Natural killer cell (primary cell): ENCODE measurements at regions of chr4 and their contacts with region 1.

Region 1: DNA sequence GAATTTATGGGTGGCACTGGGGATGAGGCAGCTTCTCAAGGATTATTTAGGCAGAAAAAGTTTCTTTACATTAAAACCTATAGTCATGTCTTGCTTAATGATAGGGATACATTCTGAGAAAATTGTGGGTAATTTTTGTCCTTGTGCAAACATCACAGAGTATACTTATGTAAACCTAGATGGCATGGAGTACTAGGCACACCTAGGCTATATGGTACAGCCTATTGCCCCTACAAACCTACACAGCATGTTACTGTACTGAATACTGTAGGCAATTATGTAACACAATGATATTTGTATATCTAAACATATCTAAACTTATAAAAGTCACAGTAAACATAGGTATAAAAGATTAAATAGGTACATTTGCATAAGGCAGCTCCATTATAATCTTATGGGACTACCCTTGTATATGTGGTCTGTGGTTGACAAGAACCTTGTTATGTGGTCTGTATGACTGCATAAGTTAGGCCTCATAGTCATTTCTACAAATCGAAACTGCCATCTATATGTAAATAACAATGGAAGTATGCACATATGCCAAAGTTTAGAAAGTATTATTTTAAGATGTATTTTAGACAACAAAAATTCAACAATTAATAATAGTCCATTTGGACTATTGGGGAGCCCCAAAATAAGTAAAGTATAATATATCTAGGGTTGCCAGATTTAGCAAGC is 87.3 kb downstream of the CFAP299 start:
- DNase-seq: peak in 1 of 2 donors; percentile 63
- ATAC-seq: peak; percentile 81 to 94 (median 90)
- H3K4me3 ChIP-seq: no peak overlapping the region
- H3K4me3 Mint-ChIP-seq: no peak overlapping the region
- H3K27ac ChIP-seq: peak overlapping the region; percentile 34
- H3K27ac Mint-ChIP-seq: peak overlapping the region; percentile 76 to 79
- H3K4me1 ChIP-seq: peaks cover 8% of the 10 kb centered on the region
- H3K4me1 Mint-ChIP-seq: peaks cover 49 to 51% of the 10 kb centered on the region in 2 donors
- H3K27me3 ChIP-seq: no peaks in the 10 kb centered on the region
- H3K27me3 Mint-ChIP-seq: no peaks in the 10 kb centered on the region
- CTCF ChIP-seq: no peak

Region 2: GRCh38 chr4:80295336-80295735 is 127.5 kb before region 1 on chr4:
- intact Hi-C with region 1: no loop called
- DNase-seq: no peak
- ATAC-seq: no peak
- H3K4me3 ChIP-seq: no peak overlapping the region
- H3K4me3 Mint-ChIP-seq: no peak overlapping the region
- H3K27ac ChIP-seq: no peak overlapping the region
- H3K27ac Mint-ChIP-seq: no peak overlapping the region
- H3K4me1 ChIP-seq: no peaks in the 10 kb centered on the region
- H3K4me1 Mint-ChIP-seq: no peaks in the 10 kb centered on the region
- H3K27me3 ChIP-seq: peaks cover 4% of the 10 kb centered on the region
- H3K27me3 Mint-ChIP-seq: peaks cover 6 to 12% of the 10 kb centered on the region in 2 donors
- CTCF ChIP-seq: no peak

Region 3: GRCh38 chr4:80438016-80438415 is 15.2 kb after region 1 on chr4:
- intact Hi-C with region 1: loop called (anchors 2 kb)
- DNase-seq: peak in 1 of 2 donors; percentile 19
- ATAC-seq: peak; percentile 54 to 71 (median 58)
- H3K4me3 ChIP-seq: no peak overlapping the region
- H3K4me3 Mint-ChIP-seq: peak overlapping the region; percentile 21
- H3K27ac ChIP-seq: peak overlapping the region; percentile 40
- H3K27ac Mint-ChIP-seq: peak overlapping the region; percentile 71 to 85
- H3K4me1 ChIP-seq: peaks cover 18% of the 10 kb centered on the region
- H3K4me1 Mint-ChIP-seq: peaks cover 27 to 35% of the 10 kb centered on the region in 2 donors
- H3K27me3 ChIP-seq: no peaks in the 10 kb centered on the region
- H3K27me3 Mint-ChIP-seq: no peaks in the 10 kb centered on the region
- CTCF ChIP-seq: no peak

Region 4: DNA sequence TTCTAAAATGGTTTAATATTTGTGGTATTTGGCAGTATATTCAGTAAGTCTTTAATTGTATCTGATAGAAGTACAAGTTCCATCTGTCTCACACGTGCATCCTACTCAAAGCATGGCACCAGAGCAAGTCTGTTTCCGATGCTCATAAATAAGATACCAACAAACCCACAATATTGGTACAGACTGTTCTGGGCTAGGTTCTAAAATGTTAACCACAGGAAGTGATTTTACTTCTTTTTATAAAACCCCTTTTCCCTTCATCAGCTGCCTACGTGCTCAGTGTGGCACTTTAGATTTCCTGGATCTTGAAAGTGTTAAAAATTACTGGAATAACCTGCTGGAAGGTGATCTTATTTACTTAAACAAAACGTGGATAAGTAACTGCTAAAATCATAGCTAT is 77.7 kb after region 1 on chr4:
- intact Hi-C with region 1: loop called (anchors 2 kb)
- DNase-seq: peak in 1 of 2 donors; percentile 71
- ATAC-seq: peak; percentile 70 to 90 (median 79)
- H3K4me3 ChIP-seq: no peak overlapping the region
- H3K4me3 Mint-ChIP-seq: no peak overlapping the region
- H3K27ac ChIP-seq: no peak overlapping the region
- H3K27ac Mint-ChIP-seq: peak overlapping the region; percentile 27 to 61
- H3K4me1 ChIP-seq: peaks cover 4% of the 10 kb centered on the region
- H3K4me1 Mint-ChIP-seq: peaks cover 12 to 13% of the 10 kb centered on the region in 2 donors
- H3K27me3 ChIP-seq: no peaks in the 10 kb centered on the region
- H3K27me3 Mint-ChIP-seq: no peaks in the 10 kb centered on the region
- CTCF ChIP-seq: no peak